Activated T-helper 2 cell treated with anti-CD3 and anti-CD28 coated beads, Interferon-gamma antibody, Interleukin-2, Interleukin-4, amounts not matched to agents 10 μg/mL and 5 μg/mL and 100 μg/mL, durations not matched to agents 14 hours and 24 hours and 36 hours (primary cell): ENCODE measurements at regions of chr9 and their contacts with region 1.

Region 1: DNA sequence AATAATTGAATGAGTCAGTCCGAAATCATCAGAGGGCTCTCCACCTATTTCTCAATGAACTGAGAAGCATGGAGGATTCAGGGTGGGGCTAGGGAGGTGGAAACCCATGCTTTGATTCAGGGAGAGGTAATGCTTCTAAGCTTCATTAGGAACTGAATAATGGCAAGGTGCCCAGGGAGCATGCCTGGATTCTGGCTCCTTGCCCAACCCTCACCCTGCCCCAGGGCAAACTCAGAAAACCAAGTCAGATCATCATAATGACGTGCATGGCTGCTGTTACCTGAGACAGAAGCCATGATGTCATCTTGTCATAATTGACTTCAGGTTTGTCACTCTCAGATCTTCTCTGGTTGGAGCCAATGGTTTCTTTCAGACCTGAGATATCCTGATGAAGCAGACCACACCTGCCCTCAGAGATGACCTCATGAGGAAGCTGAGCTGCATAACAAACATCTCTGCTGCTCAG is 199.6 kb downstream of the SYK start:
- DNase-seq: no peak
- H3K4me3 Mint-ChIP-seq: no peak overlapping the region
- H3K27ac Mint-ChIP-seq: no peak overlapping the region
- H3K4me1 Mint-ChIP-seq: peaks cover 11% of the 10 kb centered on the region
- H3K27me3 Mint-ChIP-seq: no peaks in the 10 kb centered on the region

Region 2: DNA sequence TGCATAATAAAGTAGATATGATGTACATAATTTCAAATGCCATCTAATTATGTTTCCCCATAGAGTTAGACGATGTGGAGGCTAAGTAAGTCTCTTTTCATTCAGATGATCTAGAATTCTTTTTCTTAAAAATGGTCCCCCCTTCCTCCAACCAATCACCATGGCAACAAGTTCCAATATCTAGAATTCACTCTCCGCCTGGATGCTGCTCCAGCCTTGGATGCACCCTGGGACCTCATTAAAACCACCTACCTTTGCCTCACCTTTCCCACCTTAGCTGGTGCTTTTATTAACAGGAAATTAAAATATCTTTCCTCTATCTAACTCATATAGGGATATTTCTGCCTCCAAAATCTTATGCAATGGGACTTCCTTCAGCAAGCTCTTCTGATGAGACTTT is 407.6 kb before region 1 on chr9:
- intact Hi-C with region 1: loop called (anchors 10 kb)
- DNase-seq: no peak
- H3K4me3 Mint-ChIP-seq: no peak overlapping the region
- H3K27ac Mint-ChIP-seq: no peak overlapping the region
- H3K4me1 Mint-ChIP-seq: no peaks in the 10 kb centered on the region
- H3K27me3 Mint-ChIP-seq: peaks cover 6% of the 10 kb centered on the region

Region 3: GRCh38 chr9:91150998-91151717 is 150.0 kb after region 1 on chr9:
- intact Hi-C with region 1: no loop called
- DNase-seq: peak; percentile 64
- H3K4me3 Mint-ChIP-seq: peak overlapping the region; percentile 52
- H3K27ac Mint-ChIP-seq: peak overlapping the region; percentile 96
- H3K4me1 Mint-ChIP-seq: peaks cover 90% of the 10 kb centered on the region
- H3K27me3 Mint-ChIP-seq: no peaks in the 10 kb centered on the region